ENCODE measurements at regions of chr3 and their contacts with region 1.

Region 1: DNA sequence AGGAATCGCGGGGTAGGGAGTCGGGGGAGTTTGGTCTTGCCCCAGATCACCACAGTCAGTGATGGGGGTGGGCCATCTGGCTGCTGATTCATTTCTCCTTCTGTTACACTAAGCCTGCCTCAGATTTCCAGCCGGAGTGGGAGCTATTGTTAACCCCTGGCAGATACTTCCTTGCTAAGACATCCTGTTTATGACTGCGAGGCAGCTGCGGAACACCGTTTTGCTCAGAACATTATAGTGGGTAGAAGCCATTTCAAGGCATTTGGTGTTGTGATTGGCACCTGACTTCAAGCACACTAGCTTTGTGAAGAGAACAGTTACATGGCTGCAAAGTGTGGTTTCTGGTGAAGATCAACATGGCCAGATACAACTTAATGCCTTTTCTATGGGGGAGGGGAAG is 73.8 kb downstream of the FLNB start:
- DNase-seq: peak in 11 of 14 experiments; percentile 3 to 61 (median 35)
- ATAC-seq: peak; percentile 85
- H3K4me3 ChIP-seq: no peak overlapping the region
- H3K4me3 Mint-ChIP-seq: peak overlapping the region; percentile 74
- H3K27ac ChIP-seq: peak overlapping the region; percentile 2 to 38
- H3K27ac Mint-ChIP-seq: peak overlapping the region; percentile 85
- H3K4me1 ChIP-seq: peaks cover 32% of the 10 kb centered on the region
- H3K4me1 Mint-ChIP-seq: peaks cover 62% of the 10 kb centered on the region
- H3K27me3 ChIP-seq: no peaks in the 10 kb centered on the region
- H3K27me3 Mint-ChIP-seq: no peaks in the 10 kb centered on the region
- CTCF ChIP-seq: no peak

Region 2: GRCh38 chr3:57927916-57928315 is 154.1 kb before region 1 on chr3:
- CTCF ChIA-PET with region 1: no interaction called
- POLR2A ChIA-PET with region 1: no interaction called
- intact Hi-C with region 1: no loop called
- DNase-seq: no peak
- ATAC-seq: no peak
- H3K4me3 ChIP-seq: no peak overlapping the region
- H3K4me3 Mint-ChIP-seq: no peak overlapping the region
- H3K27ac ChIP-seq: no peak overlapping the region
- H3K27ac Mint-ChIP-seq: no peak overlapping the region
- H3K4me1 ChIP-seq: no peaks in the 10 kb centered on the region
- H3K4me1 Mint-ChIP-seq: no peaks in the 10 kb centered on the region
- H3K27me3 ChIP-seq: no peaks in the 10 kb centered on the region
- H3K27me3 Mint-ChIP-seq: no peaks in the 10 kb centered on the region
- CTCF ChIP-seq: no peak

Region 3: DNA sequence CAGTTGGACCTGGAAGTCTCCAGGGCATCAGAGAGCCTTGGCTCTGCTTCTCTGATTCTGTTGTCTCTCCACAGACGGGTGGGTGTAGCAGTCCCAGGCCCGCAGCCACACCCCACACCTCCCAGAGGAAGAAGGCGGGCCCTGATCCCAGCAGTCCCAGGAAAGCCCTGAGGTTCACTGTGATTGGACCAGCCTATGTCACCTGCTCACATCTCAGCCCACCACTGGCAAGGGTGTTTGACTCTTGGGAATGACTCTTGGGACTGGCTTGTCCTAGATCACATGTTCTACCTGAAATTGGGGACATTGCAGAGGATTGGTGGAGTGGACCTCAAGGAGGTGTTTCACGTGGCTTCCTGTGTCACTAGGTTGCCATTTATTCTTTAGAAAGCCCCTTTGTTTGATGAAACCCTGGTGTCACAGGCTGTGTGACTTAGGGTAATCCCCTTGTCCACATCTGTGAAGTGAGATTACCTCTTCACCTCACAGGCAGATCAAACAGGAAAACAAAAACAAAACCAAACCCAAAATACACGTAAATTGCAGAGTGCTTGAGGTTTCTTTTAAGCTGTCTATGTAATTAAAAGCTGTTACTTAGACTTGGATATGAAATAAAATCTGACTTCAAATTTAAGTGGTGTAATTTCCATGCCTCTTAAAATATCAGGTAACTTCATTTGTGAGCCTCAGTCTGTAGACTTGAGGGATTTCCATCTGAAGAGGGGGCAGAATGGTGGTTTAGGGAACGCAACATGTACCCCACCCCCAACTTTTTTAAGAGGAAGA is 47.1 kb before region 1 on chr3:
- CTCF ChIA-PET with region 1: no interaction called
- POLR2A ChIA-PET with region 1: interaction called, 6 read pairs
- intact Hi-C with region 1: loop called in 1 of 2 experiments (anchors 1 kb)
- DNase-seq: peak in 6 of 14 experiments; percentile 3 to 86 (median 56)
- ATAC-seq: peak; percentile 94
- H3K4me3 ChIP-seq: no peak overlapping the region
- H3K4me3 Mint-ChIP-seq: peak overlapping the region; percentile 60
- H3K27ac ChIP-seq: peak overlapping the region; percentile 15 to 44
- H3K27ac Mint-ChIP-seq: peak overlapping the region; percentile 85
- H3K4me1 ChIP-seq: peaks cover 28% of the 10 kb centered on the region
- H3K4me1 Mint-ChIP-seq: peaks cover 59% of the 10 kb centered on the region
- H3K27me3 ChIP-seq: no peaks in the 10 kb centered on the region
- H3K27me3 Mint-ChIP-seq: no peaks in the 10 kb centered on the region
- CTCF ChIP-seq: no peak

Region 4: DNA sequence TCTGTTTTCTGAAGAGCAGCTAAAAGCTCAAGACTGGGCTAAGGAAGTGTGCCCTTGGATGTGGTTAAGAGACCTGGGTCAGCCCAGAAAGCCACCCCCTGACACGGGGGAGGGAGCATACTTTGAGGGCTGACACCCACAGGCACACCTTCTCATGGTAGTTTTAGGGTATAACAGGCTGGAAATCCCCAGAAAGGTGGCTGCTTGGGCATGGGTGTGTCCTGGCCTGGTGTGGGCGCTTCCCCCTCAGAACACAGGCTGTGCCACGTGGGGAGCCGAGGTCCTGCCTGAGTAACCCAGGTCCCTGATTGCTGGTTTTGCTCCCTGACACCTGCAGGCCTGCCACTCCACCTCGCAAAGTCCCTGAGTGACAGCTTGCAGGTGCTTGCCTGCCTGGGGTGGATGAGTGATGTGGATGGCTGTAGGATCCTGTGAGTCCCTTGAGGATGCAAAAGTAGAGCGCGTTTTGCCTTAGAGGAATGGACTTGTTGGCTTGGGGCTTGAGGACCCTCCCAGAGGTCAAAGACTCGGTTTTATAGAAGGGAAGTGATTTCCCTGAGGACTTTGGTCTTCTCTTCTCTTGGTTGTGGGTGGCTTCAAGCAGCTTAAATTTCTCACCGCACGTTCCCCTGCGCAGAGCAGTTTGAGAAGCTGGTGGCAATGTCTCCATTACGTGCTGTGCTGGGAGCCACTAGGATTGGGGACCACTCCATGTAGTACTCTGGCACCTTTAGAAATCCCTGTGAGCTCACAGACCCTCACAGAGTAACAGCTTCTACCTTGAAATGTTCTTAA is 34.3 kb after region 1 on chr3:
- CTCF ChIA-PET with region 1: no interaction called
- POLR2A ChIA-PET with region 1: interaction called, 11 read pairs
- intact Hi-C with region 1: no loop called
- DNase-seq: peak; percentile 10 to 87 (median 47)
- ATAC-seq: peak; percentile 93
- H3K4me3 ChIP-seq: no peak overlapping the region
- H3K4me3 Mint-ChIP-seq: peak overlapping the region; percentile 42
- H3K27ac ChIP-seq: peak overlapping the region; percentile 29 to 58
- H3K27ac Mint-ChIP-seq: peak overlapping the region; percentile 85
- H3K4me1 ChIP-seq: peaks cover 23% of the 10 kb centered on the region
- H3K4me1 Mint-ChIP-seq: peaks cover 40% of the 10 kb centered on the region
- H3K27me3 ChIP-seq: no peaks in the 10 kb centered on the region
- H3K27me3 Mint-ChIP-seq: no peaks in the 10 kb centered on the region
- CTCF ChIP-seq: no peak

Measured in CD4-positive, alpha-beta T cell (primary cell).